Activated T-helper 2 cell treated with anti-CD3 and anti-CD28 coated beads, Interferon-gamma antibody, Interleukin-2, Interleukin-4, amounts not matched to agents 10 μg/mL and 5 μg/mL and 100 μg/mL, durations not matched to agents 14 hours and 24 hours and 36 hours (primary cell): ENCODE measurements at regions of chr16 and their contacts with region 1.

Region 1: DNA sequence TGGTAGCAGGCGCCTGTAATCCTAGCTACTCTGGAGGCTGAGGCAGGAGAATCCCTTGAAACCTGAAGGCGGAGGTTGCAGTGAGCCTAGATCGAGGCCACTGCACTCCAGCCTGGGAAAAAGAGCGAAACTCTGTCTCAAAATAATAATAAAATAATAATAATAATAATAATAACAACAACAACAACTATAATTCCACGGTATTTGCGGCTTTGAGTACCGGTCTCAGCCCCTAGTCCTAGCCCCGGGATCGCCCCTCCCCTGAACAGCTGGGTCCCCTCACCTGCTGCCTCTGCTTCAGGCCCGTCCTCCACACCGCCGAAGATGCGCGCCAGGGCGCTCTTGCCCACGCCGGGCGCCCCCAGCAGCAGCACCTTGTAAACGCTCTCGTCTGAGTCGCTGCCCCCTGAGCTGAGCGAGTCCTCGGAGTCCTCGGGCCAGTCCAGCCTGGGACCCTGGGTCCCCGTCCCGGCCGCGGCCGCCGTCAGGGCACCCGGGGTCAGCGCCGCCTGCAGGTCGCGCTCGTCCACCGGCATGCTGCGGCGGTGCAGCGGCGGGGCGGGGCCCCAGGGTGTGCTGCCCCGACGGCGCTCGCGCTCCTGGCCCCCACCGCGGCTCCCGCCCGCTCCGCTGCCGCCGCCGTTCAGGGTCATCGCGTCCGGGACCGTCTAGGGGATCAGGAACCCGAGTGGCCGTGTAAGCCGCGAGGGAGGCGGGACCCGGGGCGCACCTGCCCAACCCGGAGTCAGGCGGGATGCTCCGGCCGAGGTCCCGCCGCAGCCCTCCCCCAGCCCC is 611 bp downstream of the RRAD start:
- DNase-seq: peak; percentile 29
- H3K4me3 Mint-ChIP-seq: peak overlapping the region; percentile 13
- H3K27ac Mint-ChIP-seq: no peak overlapping the region
- H3K4me1 Mint-ChIP-seq: peaks cover 20% of the 10 kb centered on the region
- H3K27me3 Mint-ChIP-seq: peaks cover 36% of the 10 kb centered on the region

Region 2: GRCh38 chr16:66696669-66697630 is 227.8 kb before region 1 on chr16 and contains the start of gene CMTM4:
- intact Hi-C with region 1: no loop called
- DNase-seq: peak; percentile 71
- H3K4me3 Mint-ChIP-seq: peak within 1 kb of the TSS; percentile 69
- H3K27ac Mint-ChIP-seq: no peak within 1 kb of the TSS
- H3K4me1 Mint-ChIP-seq: peaks cover 9% of the 10 kb centered on the region
- H3K27me3 Mint-ChIP-seq: peaks cover 39% of the 10 kb centered on the region
- total RNA-seq, gene CMTM4: 3.8 and 4.0 TPM in 2 replicates

Region 3: DNA sequence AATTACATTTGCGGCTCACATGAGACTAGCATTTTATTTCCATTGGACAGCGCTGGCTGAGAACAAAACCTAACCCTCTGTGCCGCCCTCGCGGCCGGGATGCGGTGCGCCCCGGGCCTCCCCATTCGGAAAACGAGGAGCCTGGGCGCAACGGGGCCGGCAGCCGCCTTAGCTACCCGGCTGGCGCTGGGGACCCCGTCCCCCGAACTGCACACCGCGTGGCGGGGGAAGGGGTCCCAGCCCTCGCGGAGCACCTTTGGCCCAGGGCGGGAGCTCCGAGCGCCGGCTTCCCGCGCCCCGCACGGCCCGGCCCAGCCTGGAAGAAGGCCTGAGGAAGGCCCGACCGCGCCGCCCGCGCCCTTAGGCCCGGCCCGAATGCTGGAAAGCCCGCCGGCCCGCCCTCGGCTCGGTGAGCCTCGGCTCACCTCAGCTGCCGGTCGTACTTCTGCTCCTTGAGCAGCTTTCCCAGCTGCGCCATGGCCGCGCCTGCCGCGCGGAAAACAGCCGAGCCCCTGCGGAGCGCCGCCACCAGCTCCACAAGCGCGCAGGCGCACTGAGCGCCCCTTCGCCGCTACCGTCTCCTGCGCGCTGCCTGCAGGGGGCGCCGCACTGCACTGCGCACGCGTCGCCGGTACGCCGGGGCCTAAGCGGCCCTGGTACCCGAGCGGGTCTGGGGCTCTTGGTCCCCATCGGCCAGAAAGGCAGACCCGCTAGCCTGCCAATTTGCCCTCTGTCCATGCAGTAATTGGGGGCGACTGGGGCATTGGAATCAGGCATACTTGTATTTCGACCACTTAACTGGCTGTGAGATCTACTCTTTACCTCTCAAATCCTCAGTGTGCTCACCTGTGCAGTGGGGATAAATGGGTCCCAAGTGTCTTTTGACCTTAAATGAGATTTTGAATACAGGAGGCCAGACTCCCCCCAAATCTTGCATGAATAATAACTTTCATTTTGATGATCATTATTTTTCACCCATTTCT is 94.0 kb before region 1 on chr16 and contains the start of gene NAE1:
- intact Hi-C with region 1: loop called (anchors 5 kb)
- DNase-seq: peak; percentile 89
- H3K4me3 Mint-ChIP-seq: peak within 1 kb of the TSS; percentile 75
- H3K27ac Mint-ChIP-seq: peak within 1 kb of the TSS; percentile 69
- H3K4me1 Mint-ChIP-seq: peaks cover 27% of the 10 kb centered on the region
- H3K27me3 Mint-ChIP-seq: no peaks in the 10 kb centered on the region
- total RNA-seq, gene NAE1: 123 and 125 TPM in 2 replicates

Region 4: DNA sequence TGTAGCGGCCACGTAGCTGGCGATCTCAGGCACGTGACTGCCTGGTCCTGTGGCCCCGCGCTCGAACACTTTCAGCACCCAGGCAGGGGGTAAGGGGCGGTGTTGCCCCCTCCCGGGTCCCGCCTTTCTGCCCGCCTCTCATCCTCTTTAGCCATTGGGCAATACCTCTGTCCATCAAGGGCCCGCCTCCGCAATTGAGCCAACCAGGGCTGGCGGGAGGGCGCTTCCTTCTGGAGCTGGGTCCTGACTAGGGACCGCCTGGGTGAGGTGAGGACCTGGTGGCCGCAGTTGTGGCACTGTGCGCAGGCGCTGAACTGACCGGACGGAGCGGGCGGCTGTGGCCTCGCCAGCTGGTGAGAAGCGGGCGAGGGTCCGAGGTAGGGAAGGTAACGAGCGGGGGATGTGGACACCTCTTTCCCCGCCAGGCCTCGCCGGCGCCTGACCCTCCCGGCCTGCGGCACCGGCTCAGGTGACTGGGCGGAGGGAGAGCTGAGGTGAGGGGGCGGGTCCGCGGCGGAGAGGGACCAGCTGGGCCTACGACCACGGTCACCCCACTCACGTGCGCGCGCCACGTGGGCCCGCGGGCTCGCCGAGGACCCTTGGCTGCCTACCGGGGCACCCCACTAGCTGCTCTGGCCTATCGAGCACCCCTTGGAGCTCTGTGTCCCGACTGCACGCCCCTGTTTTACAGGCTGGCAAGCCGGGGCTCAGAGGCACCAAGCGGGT is 44.3 kb before region 1 on chr16 and contains the start of gene PDP2:
- intact Hi-C with region 1: loop called (anchors 5 kb)
- DNase-seq: peak; percentile 91
- H3K4me3 Mint-ChIP-seq: peak within 1 kb of the TSS; percentile 98
- H3K27ac Mint-ChIP-seq: peak within 1 kb of the TSS; percentile 99
- H3K4me1 Mint-ChIP-seq: peaks cover 37% of the 10 kb centered on the region
- H3K27me3 Mint-ChIP-seq: no peaks in the 10 kb centered on the region
- total RNA-seq, gene PDP2: 40.6 and 40.7 TPM in 2 replicates

Region 5: GRCh38 chr16:66894948-66895688 is 29.6 kb before region 1 on chr16:
- intact Hi-C with region 1: loop called (anchors 1 kb)
- DNase-seq: peak; percentile 49
- H3K4me3 Mint-ChIP-seq: no peak overlapping the region
- H3K27ac Mint-ChIP-seq: no peak overlapping the region
- H3K4me1 Mint-ChIP-seq: peaks cover 9% of the 10 kb centered on the region
- H3K27me3 Mint-ChIP-seq: no peaks in the 10 kb centered on the region